Right cardiac atrium (tissue), 5 donors: ENCODE measurements at regions of chr5 and their contacts with region 1.

Region 1: DNA sequence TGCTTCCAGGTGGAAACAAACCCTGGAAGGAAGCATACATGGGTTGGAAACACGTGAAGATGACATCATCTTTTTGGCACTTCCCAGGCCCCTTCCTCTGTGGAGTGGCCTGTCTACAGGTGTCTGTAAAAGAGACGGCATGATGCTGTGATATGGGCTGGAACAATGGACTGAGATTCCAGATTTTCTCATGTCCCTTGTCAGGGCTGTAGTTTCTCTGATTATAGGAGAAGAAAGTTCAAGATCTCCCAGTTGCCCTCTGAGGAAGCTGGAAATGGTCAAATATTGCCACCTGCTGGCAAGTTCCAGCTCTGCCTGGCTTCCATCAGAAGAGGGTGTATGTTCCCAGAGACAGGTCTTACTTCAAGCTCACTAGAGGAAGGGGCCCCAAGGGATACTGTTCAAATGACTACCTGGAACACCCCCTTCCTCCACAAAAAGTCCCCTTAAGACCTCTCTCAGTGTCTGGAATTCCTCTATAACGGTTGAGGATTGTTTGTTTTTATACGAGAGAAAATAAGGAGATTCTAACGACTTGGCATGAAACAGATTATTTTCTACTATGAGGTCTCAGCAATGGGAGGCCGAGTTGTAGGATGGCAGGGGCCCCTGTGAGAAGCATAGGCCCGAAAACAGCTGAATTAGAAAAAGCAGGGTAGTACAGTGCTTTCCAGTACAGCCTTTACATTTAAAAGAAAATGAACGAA is 7.3 kb upstream of the ANXA6 start:
- DNase-seq: peak; percentile 61 to 88 (median 83)
- ATAC-seq: peak; percentile 87 to 89
- H3K4me3 ChIP-seq: no peak overlapping the region
- H3K27ac ChIP-seq: no peak overlapping the region
- H3K4me1 ChIP-seq: peaks cover 3% of the 10 kb centered on the region
- H3K27me3 ChIP-seq: no peaks in the 10 kb centered on the region

Region 2: GRCh38 chr5:151051066-151051930 is 113.5 kb before region 1 on chr5:
- intact Hi-C with region 1: loop called in 1 of 4 experiments (anchors 5 kb)
- DNase-seq: peak; percentile 84 to 94 (median 91)
- ATAC-seq: peak; percentile 81 to 88
- H3K4me3 ChIP-seq: no peak overlapping the region
- H3K27ac ChIP-seq: no peak overlapping the region
- H3K4me1 ChIP-seq: peaks cover 5% of the 10 kb centered on the region
- H3K27me3 ChIP-seq: no peaks in the 10 kb centered on the region

Region 3: DNA sequence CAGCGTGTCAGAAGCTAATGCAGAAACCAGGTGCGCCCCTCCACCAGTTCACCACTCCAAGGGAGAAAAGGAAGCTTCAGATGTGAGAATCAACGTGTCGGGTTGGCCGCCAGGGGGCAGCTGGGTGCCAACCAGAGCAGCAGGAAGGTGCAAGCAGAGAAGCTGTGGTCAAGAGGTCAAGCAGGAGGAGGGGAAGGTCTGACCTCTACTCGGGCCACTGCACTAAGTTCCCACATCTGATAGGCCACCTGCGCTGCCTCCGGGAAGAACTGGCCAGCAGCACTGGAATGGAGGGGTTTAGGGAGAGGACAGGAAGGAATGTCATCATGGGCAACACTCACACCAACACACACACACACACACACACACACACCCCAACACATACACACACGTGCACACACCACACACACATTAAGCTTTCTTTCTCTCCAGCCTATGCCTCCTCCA is 38.6 kb before region 1 on chr5:
- intact Hi-C with region 1: loop called in 3 of 4 experiments (anchors 1 to 5 kb)
- DNase-seq: peak; percentile 74 to 92 (median 91)
- ATAC-seq: peak; percentile 50 to 73
- H3K4me3 ChIP-seq: no peak overlapping the region
- H3K27ac ChIP-seq: no peak overlapping the region
- H3K4me1 ChIP-seq: no peaks in the 10 kb centered on the region
- H3K27me3 ChIP-seq: no peaks in the 10 kb centered on the region

Region 4: DNA sequence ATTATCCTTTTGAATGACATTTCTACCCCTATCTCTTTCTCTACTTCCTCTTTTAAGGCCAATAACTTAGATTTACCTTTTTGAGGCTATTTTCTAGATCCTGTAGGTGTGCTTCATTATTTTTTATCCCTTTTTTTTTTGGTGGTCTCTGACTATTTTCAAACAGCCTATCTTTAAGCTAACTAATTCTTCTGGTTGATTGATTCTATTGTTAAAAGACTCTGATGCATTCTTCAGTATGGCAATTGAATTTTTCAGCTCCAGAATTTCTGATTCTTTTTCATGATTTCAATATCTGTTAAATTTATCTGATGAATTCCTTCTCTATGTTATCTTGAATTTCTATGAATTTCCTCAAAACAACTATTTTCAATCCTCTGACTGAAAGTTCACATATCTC is 146.1 kb after region 1 on chr5:
- intact Hi-C with region 1: no loop called
- DNase-seq: no peak
- ATAC-seq: no peak
- H3K4me3 ChIP-seq: no peak overlapping the region
- H3K27ac ChIP-seq: no peak overlapping the region
- H3K4me1 ChIP-seq: no peaks in the 10 kb centered on the region
- H3K27me3 ChIP-seq: no peaks in the 10 kb centered on the region